ENCODE measurements at regions of chr14 and their contacts with region 1.

Region 1: DNA sequence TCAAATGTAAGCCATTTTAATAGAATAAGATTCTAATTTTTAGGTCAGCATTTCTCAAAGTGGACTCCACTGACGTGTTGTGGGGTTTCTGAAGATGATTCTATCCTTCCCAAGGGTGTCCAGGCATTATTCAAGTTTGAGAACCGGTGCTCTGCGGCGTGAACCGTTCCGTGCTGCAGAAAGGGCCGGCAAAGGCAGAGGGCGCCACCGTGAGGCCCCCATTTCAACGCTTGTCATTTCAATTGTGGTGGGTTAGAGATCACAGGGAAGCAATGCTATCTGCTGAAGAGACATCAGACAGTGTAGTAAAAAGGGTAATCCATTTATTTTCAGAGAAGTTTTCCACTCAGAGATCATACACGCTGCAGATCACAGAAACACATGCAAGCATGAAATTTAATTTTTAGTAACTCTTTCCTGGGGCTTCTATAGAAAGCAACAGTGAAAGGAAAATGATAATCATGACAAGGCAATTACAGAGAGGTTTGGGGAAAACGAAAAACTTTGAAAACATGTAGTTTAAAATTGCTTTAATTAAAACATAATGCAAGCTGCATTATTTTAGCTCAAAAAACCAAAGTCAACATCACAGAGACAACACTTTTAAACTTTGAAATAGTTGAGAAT is 201.7 kb downstream of the EXOC5 start:
- DNase-seq: peak; percentile 65
- H3K4me3 Mint-ChIP-seq: no peak overlapping the region
- H3K27ac Mint-ChIP-seq: no peak overlapping the region
- H3K4me1 Mint-ChIP-seq: peaks cover under 1% of the 10 kb centered on the region
- H3K27me3 Mint-ChIP-seq: peaks cover 23% of the 10 kb centered on the region

Region 2: DNA sequence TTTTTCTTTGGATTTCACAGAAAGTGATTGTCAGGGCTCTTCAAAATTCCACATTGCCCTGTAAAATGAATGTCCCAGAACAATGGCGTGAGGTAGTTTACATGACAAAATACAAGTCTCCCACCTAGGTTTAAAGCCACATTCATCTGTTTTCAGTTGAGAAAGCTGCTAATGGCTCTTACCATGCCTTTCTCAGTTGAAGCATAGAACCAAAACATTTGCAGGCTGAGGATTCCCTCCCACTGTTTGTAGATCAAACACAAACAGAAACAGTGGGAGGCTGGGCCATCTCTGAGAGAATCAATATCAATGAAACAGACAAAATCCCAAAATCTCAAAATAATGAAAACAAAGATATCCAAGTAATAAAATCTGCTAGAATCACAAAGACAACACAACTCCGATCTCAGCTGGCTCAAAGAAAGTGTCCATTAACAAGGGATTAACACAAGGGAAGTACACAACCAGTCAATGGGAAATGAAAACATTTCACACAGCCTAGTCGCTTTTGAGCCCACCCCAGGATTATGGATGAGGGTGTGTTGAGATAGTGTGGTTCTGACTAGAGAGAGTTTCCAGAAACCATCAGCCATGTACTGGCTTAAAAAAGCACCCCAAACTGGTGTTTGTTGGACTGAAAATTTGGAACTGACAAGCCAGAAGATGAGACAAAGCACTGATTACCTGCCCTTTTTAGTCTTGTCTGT is 541.9 kb before region 1 on chr14:
- CTCF ChIA-PET with region 1: no interaction called
- POLR2A ChIA-PET with region 1: no interaction called
- intact Hi-C with region 1: no loop called
- DNase-seq: no peak
- H3K4me3 Mint-ChIP-seq: no peak overlapping the region
- H3K27ac Mint-ChIP-seq: no peak overlapping the region
- H3K4me1 Mint-ChIP-seq: no peaks in the 10 kb centered on the region
- H3K27me3 Mint-ChIP-seq: peaks cover 26% of the 10 kb centered on the region

Region 3: DNA sequence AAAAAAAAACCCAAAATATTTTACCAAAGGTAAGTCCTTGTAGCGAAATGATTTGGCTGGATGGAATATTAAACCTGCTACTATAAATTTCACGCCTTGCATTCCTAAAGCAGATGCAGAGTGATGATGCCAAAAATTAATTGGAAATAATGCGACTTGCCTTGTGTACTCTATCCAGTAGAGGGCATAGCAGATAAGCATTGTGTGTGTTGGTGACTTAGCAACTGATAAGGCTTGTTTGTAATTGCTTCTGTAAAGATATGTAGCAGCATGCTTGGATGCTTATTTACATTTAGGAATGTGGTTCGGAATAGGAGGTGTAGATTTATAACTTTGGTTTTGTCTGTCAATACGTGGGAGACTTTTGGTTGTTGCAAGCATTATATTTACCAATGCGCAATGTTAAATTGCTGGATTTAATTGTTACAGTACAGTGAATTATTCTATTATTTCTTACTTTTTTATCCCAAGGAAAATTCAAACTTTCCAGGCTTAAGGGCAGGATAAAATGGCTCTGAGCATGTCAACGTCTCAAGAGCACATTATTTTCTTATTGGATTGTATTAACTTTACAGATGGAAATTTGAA is 406.9 kb before region 1 on chr14:
- CTCF ChIA-PET with region 1: interaction called, 4 read pairs
- POLR2A ChIA-PET with region 1: no interaction called
- intact Hi-C with region 1: loop called (anchors 10 kb)
- DNase-seq: no peak
- H3K4me3 Mint-ChIP-seq: no peak overlapping the region
- H3K27ac Mint-ChIP-seq: no peak overlapping the region
- H3K4me1 Mint-ChIP-seq: no peaks in the 10 kb centered on the region
- H3K27me3 Mint-ChIP-seq: no peaks in the 10 kb centered on the region

Region 4: DNA sequence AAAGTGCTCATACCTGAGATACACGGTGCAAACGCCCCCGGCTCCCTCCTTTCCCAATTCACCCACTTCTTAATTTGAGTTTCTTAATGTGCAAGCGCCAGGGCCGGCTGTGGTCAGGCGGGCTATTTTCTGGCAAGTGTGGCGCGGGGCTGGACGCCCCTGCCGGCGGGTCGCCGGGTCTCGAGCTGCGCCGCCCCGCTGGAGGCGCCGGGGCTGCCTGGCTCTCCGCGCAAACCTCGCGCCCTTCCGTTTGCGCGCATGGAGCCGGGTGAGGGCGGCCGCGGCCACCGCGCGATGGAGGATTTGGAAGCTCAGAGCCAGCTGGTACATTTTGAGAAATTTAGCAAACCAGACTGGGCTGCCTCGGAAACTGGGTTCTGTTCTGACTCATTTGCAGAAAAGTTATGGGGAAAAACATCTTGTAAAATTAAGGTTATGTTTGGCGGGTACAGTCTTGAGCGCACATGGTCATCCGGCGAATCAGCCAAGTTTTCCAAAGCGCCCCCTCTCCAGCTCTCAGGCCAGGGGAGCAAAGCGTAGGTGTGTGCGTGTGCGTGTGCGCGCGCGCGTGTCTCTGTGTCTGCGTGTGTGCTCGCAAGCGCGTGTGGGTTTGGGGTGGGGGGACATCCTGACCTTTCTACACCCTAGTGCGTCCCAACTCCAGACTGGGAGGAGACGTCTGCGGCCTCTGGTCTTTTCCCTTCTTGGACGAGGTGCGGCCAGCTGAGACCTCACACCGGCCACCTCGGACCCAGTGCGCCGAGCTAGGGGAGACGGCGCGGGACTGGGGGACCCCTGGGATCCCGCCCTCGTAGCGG is 250.2 kb before region 1 on chr14:
- CTCF ChIA-PET with region 1: no interaction called
- POLR2A ChIA-PET with region 1: no interaction called
- intact Hi-C with region 1: loop called (anchors 10 kb)
- DNase-seq: no peak
- H3K4me3 Mint-ChIP-seq: no peak overlapping the region
- H3K27ac Mint-ChIP-seq: no peak overlapping the region
- H3K4me1 Mint-ChIP-seq: no peaks in the 10 kb centered on the region
- H3K27me3 Mint-ChIP-seq: peaks cover 52% of the 10 kb centered on the region

Region 5: GRCh38 chr14:57051633-57052032 is 15.4 kb before region 1 on chr14:
- CTCF ChIA-PET with region 1: no interaction called
- POLR2A ChIA-PET with region 1: no interaction called
- intact Hi-C with region 1: no loop called
- DNase-seq: no peak
- H3K4me3 Mint-ChIP-seq: no peak overlapping the region
- H3K27ac Mint-ChIP-seq: no peak overlapping the region
- H3K4me1 Mint-ChIP-seq: no peaks in the 10 kb centered on the region
- H3K27me3 Mint-ChIP-seq: peaks cover 8% of the 10 kb centered on the region

Region 6: DNA sequence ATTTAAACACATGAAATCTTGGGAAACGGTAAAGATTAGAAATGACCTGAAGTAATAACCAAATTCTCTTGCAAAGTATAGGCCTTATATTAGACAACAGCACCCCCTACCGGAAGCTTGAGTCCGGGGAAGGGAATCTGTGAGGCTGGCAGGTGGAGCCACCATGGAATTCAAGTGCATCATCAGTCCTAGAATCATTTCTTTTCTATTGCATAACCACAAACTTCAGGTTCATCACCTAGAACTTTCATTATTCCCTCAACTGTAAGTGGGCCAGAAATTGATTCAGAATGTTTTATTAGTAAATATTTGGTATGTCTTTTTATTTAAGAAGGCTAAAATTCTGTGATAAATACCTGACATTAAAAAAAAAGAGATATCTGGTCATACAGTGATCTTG is 250.3 kb after region 1 on chr14:
- CTCF ChIA-PET with region 1: interaction called, 3 read pairs
- POLR2A ChIA-PET with region 1: no interaction called
- intact Hi-C with region 1: loop called (anchors 5 kb)
- DNase-seq: peak; percentile 73
- H3K4me3 Mint-ChIP-seq: no peak overlapping the region
- H3K27ac Mint-ChIP-seq: no peak overlapping the region
- H3K4me1 Mint-ChIP-seq: peaks cover 3% of the 10 kb centered on the region
- H3K27me3 Mint-ChIP-seq: no peaks in the 10 kb centered on the region

Measured in activated CD4-positive, alpha-beta memory T cell treated with anti-CD3 and anti-CD28 coated beads for 36 hours (primary cell).